Dendritic cell treated with granulocyte-macrophage colony-stimulating factor and Interleukin-4, amounts not matched to agents 40 ng/mL and 50 ng/mL, for 4 days (primary cell): ENCODE measurements at regions of chr1 and their contacts with region 1.

Region 1: DNA sequence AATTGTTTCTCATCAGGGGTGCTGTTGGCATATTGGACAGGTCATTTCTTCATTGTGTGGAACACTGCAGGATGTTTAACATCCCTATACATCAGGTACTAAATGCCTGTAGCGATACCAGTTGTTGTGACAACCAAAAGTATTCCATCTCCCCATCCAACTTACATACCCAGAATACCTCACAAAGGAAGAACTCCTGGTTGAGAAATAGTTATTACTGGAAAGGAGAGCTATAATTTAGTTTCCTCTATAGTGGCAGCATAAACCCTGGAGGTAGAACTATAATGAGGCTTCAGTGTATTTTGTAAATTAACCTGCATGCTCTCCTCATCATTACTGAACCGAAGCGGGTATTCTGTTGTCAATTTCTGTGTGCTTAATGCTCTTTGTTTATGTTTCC is 45.1 kb downstream of the IVNS1ABP start:
- H3K4me3 Mint-ChIP-seq: no peak overlapping the region
- H3K27ac Mint-ChIP-seq: no peak overlapping the region
- H3K4me1 Mint-ChIP-seq: no peaks in the 10 kb centered on the region
- H3K27me3 Mint-ChIP-seq: no peaks in the 10 kb centered on the region

Region 2: GRCh38 chr1:185044981-185045813 is 226.7 kb before region 1 on chr1 and contains the start of gene RNF2:
- intact Hi-C with region 1: no loop called
- H3K4me3 Mint-ChIP-seq: peak within 1 kb of the TSS; percentile 88
- H3K27ac Mint-ChIP-seq: peak within 1 kb of the TSS; percentile 89
- H3K4me1 Mint-ChIP-seq: peaks cover 31% of the 10 kb centered on the region
- H3K27me3 Mint-ChIP-seq: no peaks in the 10 kb centered on the region

Region 3: DNA sequence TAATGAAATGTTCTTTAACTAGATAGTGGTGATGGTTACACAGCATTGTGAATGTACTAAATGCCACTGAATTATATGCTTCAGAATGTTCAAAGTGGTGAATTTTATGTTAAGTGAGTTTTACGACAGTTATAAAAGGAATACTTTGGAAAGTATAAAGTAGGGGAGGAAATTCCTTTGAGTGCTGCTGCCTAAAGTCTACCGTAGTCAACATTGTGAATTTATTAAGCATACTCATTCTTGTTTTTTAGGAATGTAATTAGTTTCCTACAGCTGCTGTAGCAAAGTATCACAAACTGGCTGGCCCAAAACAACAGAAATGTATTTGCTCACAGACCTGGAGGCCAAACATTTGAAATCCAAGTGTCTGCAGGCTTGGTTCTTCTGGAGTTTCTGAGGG is 42.0 kb before region 1 on chr1:
- intact Hi-C with region 1: loop called (anchors 5 kb)
- H3K4me3 Mint-ChIP-seq: no peak overlapping the region
- H3K27ac Mint-ChIP-seq: no peak overlapping the region
- H3K4me1 Mint-ChIP-seq: no peaks in the 10 kb centered on the region
- H3K27me3 Mint-ChIP-seq: no peaks in the 10 kb centered on the region